ENCODE measurements at regions of chr15 and their contacts with region 1.

Region 1: GRCh38 chr15:36808411-36809160 is 229.2 kb downstream of the CDIN1 start:
- DNase-seq: no peak
- H3K4me3 Mint-ChIP-seq: peak overlapping the region; percentile 25
- H3K27ac Mint-ChIP-seq: peak overlapping the region; percentile 30
- H3K4me1 Mint-ChIP-seq: peaks cover 25% of the 10 kb centered on the region
- H3K27me3 Mint-ChIP-seq: no peaks in the 10 kb centered on the region
- CTCF ChIP-seq: no peak

Region 2: GRCh38 chr15:36334059-36334458 is 474.5 kb before region 1 on chr15:
- CTCF ChIA-PET with region 1: no interaction called
- intact Hi-C with region 1: no loop called
- DNase-seq: no peak
- H3K4me3 Mint-ChIP-seq: no peak overlapping the region
- H3K27ac Mint-ChIP-seq: no peak overlapping the region
- H3K4me1 Mint-ChIP-seq: no peaks in the 10 kb centered on the region
- H3K27me3 Mint-ChIP-seq: no peaks in the 10 kb centered on the region
- CTCF ChIP-seq: no peak

Region 3: DNA sequence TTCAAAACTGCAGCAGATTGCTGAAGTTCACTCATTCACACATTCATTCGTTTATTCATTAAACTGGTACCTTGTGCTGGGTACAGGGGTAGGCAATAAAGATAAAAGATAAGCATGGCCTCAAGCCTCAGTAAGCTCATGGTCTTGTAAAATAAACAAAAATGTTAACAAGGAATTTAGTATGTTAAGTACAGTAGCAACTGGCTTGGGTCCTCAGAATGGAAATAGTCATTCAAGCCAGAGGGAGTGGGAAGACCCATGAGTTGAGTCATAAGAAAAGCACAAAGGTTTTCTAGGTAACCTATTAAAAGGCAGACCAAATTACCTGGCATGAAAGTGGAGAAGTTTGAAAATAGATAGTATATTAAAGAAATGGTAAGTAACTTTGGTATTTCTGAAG is 65.9 kb before region 1 on chr15:
- CTCF ChIA-PET with region 1: no interaction called
- intact Hi-C with region 1: loop called (anchors 10 kb)
- DNase-seq: no peak
- H3K4me3 Mint-ChIP-seq: no peak overlapping the region
- H3K27ac Mint-ChIP-seq: no peak overlapping the region
- H3K4me1 Mint-ChIP-seq: peaks cover 20% of the 10 kb centered on the region
- H3K27me3 Mint-ChIP-seq: no peaks in the 10 kb centered on the region
- CTCF ChIP-seq: no peak